PC-9 (cell line): ENCODE measurements at regions of chr1 and their contacts with region 1.

Region 1: GRCh38 chr1:52748119-52748518 is 21.9 kb downstream of the ZYG11B start:
- DNase-seq: no peak
- H3K4me3 ChIP-seq: no peak overlapping the region
- H3K27ac ChIP-seq: no peak overlapping the region
- H3K4me1 ChIP-seq: peaks cover 8% of the 10 kb centered on the region
- H3K27me3 ChIP-seq: no peaks in the 10 kb centered on the region
- CTCF ChIP-seq: peak; percentile 46; the same call in 1 of the 2 replicates

Region 2: GRCh38 chr1:52574594-52574993 is 173.5 kb before region 1 on chr1:
- CTCF ChIA-PET with region 1: no interaction called
- POLR2A ChIA-PET with region 1: no interaction called
- intact Hi-C with region 1: no loop called
- DNase-seq: peak; percentile 31 to 93
- H3K4me3 ChIP-seq: no peak overlapping the region
- H3K27ac ChIP-seq: no peak overlapping the region
- H3K4me1 ChIP-seq: peaks cover 12% of the 10 kb centered on the region
- H3K27me3 ChIP-seq: no peaks in the 10 kb centered on the region
- CTCF ChIP-seq: no peak

Region 3: DNA sequence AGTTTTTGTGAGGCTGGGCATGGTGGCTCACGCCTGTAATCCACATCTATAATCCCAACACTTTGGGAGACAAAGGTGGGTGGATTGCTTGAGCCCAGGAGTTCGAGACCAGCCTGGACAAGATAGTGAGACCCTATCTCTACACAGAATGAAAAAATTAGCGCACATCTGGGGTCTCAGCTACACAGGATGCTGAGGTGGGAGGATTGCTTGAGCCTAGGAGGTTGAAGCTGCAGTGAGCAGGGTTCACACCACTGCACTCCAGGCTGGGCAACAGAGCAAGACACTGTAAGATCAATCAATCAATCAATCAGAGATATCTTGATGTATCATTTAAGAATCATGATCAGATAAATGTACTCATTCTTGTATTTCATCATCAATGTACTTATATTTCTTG is 14.8 kb before region 1 on chr1:
- CTCF ChIA-PET with region 1: no interaction called
- POLR2A ChIA-PET with region 1: interaction called, 18 read pairs
- intact Hi-C with region 1: no loop called
- DNase-seq: no peak
- H3K4me3 ChIP-seq: no peak overlapping the region
- H3K27ac ChIP-seq: no peak overlapping the region
- H3K4me1 ChIP-seq: 0 out of 2 replicates have a peak, but pooled peaks cover 1% of the 10 kb centered on the region
- H3K27me3 ChIP-seq: no peaks in the 10 kb centered on the region
- CTCF ChIP-seq: no peak